Gastrocnemius medialis (tissue), 4 donors: ENCODE measurements at regions of chr9 and their contacts with region 1.

Region 1: DNA sequence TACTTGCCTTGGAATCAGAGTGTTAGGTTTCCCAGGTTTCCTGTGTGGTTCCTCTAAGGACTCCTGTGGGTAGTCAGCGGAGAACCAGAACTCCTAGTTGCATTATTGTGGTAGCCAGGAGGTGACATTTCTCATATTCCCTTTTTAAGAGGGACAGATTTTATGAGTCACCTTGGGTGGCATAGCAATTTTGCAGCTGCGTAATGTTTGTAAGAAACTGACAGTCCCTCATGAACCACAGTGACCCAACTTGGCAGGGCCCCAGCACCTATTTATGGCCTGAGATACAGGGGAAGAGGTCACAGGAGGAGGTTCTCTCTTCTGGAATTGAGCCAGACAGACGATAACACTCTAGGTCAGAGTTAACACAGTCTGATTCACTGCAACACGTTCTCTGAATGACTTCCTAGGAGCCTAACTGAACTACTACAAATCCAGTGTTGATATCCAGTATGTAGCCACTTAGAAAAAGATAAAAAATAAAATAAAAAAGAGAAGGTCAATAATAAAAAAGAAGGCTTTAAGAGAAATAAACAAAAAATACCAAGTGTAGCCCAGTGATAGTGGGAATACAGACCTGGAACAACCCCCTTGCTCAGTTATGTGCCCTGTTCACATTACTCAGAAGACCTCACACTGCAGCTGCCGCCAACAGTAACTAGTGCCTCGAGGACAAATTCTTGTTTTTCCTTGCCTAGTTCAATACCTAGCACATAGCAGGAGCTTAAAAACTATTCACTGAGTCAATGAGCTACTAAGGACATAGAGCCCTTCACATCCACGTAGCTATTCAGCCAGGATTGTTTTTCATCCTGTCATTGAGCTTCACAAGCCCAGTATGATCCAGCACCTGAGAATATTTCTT is 50.7 kb upstream of the VLDLR start:
- DNase-seq: peak; percentile 96 to 100
- ATAC-seq: peak; percentile 90 to 97
- H3K4me3 ChIP-seq: peak overlapping the region in 1 of 4 donors; percentile 5
- H3K27ac ChIP-seq: peak overlapping the region; percentile 81 to 84 (median 82)
- H3K4me1 ChIP-seq: peaks cover 17 to 39% of the 10 kb centered on the region in 2 donors
- H3K27me3 ChIP-seq: no peaks in the 10 kb centered on the region
- CTCF ChIP-seq: no peak
- POLR2A ChIP-seq: no peak

Region 2: GRCh38 chr9:2291980-2292665 is 278.7 kb before region 1 on chr9:
- in situ Hi-C with region 1: no loop called
- intact Hi-C with region 1: loop called (anchors 2 kb)
- DNase-seq: peak; percentile 81 to 91
- ATAC-seq: peak; percentile 92 to 96
- H3K4me3 ChIP-seq: no peak overlapping the region
- H3K27ac ChIP-seq: peak overlapping the region; percentile 62 to 83 (median 76)
- H3K4me1 ChIP-seq: peaks cover 12 to 20% of the 10 kb centered on the region in 2 donors
- H3K27me3 ChIP-seq: no peaks in the 10 kb centered on the region
- CTCF ChIP-seq: no peak
- POLR2A ChIP-seq: no peak

Region 3: GRCh38 chr9:2620919-2621679 is 50.3 kb after region 1 on chr9:
- in situ Hi-C with region 1: loop called in 1 of 4 experiments (anchors 10 kb)
- intact Hi-C with region 1: loop called (anchors 1 kb)
- DNase-seq: peak; percentile 71 to 85
- ATAC-seq: peak; percentile 56 to 59
- H3K4me3 ChIP-seq: peak overlapping the region; percentile 72 to 94 (median 90)
- H3K27ac ChIP-seq: peak overlapping the region; percentile 95 to 98 (median 97)
- H3K4me1 ChIP-seq: peaks cover 16 to 29% of the 10 kb centered on the region in 2 donors
- H3K27me3 ChIP-seq: no peaks in the 10 kb centered on the region
- CTCF ChIP-seq: peak in 4 of 5 experiments; percentile 21 to 40 (median 32)
- POLR2A ChIP-seq: peak; percentile 69 to 70

Region 4: DNA sequence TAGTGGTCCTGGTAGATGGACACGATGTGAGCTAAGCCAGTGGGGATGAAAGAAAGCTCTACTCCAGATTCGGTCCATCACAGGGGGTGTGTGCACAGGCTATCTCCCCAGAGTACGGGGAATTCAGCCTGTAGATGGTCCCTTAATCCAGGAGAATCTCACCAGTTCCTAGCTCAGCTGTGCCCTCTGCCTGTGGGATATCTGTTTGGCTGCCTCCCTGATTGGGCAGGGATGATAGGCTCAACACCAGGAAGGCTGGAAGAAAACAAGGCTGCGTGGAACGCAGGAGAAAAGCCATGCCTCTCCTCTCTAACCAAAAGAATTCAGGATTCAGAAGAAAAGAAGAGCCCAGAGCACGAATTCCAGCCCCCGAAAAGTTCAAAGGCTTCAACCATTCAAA is 91.6 kb after region 1 on chr9:
- in situ Hi-C with region 1: no loop called
- intact Hi-C with region 1: loop called (anchors 1 kb)
- DNase-seq: peak in 1 of 2 donors; percentile 40
- ATAC-seq: peak in 1 of 2 donors; percentile 45
- H3K4me3 ChIP-seq: no peak overlapping the region
- H3K27ac ChIP-seq: peak overlapping the region; percentile 76 to 92 (median 86)
- H3K4me1 ChIP-seq: peaks cover 29 to 43% of the 10 kb centered on the region in 2 donors
- H3K27me3 ChIP-seq: no peaks in the 10 kb centered on the region
- CTCF ChIP-seq: peak in 3 of 5 experiments; percentile 24 to 33 (median 26)
- POLR2A ChIP-seq: no peak

Region 5: DNA sequence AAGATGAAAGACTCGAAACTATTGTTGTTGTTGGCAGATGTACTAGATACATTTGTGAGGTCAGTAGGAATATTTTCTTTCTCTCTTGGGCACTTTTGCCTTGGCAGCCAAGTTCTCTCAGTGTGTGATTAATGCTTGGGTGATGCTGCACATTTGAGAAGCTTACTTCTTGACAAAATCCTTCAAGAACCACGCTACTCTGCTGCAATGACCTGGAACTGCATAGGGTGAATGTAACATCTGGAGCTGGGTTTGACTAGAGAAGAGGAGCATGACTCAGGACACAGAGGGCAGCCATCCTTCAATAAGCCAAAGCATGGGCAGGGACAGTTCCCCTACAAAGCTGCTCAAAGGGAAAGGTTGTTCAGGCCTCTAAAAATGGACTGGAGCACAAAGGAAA is 348.5 kb after region 1 on chr9:
- in situ Hi-C with region 1: no loop called
- intact Hi-C with region 1: no loop called
- DNase-seq: no peak
- ATAC-seq: no peak
- H3K4me3 ChIP-seq: no peak overlapping the region
- H3K27ac ChIP-seq: no peak overlapping the region
- H3K4me1 ChIP-seq: no peaks in the 10 kb centered on the region
- H3K27me3 ChIP-seq: no peaks in the 10 kb centered on the region
- CTCF ChIP-seq: no peak
- POLR2A ChIP-seq: no peak